WTC11 (cell line): ENCODE measurements at regions of chr11 and their contacts with region 1.

Region 1: DNA sequence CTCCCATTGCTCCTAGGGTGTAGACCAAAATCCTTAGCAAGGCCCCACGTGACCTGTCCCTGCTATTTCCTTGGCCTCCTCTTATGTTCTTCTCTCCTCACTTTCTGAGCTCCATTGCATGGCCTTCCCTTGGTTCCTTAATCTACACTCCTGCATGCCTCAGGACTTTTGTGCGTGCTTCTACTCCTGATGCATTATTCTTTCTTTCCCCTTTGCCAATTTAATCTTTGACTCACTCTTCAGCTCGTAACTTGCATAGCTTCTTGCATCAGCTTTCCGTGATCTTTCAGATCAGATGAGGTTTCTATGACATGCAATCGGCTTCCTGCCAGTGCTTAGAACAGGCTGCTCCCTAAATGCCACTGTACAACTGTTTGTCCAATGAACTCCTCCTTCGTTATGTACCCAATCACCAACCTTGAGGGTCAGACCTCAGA is 261.6 kb upstream of the CADM1 start:
- DNase-seq: no peak
- ATAC-seq: no peak
- H3K4me3 Mint-ChIP-seq: no peak overlapping the region
- H3K27ac Mint-ChIP-seq: no peak overlapping the region
- H3K4me1 Mint-ChIP-seq: peaks cover under 1% of the 10 kb centered on the region
- H3K27me3 Mint-ChIP-seq: peaks cover 19% of the 10 kb centered on the region
- CTCF ChIP-seq: no peak

Region 2: DNA sequence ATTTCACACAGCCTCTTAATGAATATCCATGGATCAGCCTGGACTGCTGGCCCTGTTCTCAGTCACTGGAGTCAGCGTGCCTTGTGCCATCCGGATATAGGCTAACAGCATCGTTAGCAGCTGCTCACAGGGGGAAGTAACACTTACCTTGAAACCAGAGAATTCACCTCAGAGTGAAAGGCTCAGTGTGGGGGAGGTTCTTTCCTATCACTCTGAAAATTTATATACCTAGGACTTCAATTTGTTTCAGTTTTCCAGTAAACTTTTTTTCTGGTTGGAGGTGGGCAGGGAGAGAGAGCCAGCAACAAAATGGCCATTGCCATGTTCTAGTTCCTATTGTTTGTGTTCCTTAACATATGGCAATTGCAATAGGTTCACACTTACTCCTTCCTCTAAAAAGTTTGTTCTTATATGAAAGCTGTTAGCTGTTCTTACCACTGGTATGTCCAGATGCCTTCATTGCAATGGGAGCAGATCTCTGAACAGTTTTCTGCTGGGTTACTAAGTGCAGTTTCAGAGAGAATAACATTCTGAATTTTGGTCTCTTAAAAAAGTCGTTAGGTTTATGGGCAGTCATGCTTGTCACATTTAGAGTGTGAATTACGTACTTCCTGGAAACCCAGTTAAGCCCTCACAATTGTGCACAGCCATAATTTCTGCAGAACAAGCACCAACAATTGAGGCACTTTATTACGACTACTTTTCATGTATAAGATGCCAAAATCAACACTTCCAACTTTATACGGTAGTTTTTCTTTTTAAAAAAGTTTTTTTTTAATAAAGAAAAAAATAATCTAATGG is 509.2 kb before region 1 on chr11:
- CTCF ChIA-PET with region 1: no interaction called
- POLR2A ChIA-PET with region 1: interaction called, 11 read pairs
- DNase-seq: peak; percentile 22
- ATAC-seq: peak; percentile 89
- H3K4me3 Mint-ChIP-seq: no peak overlapping the region
- H3K27ac Mint-ChIP-seq: peak overlapping the region; percentile 72
- H3K4me1 Mint-ChIP-seq: peaks cover 54% of the 10 kb centered on the region
- H3K27me3 Mint-ChIP-seq: peaks cover 3% of the 10 kb centered on the region; the same call in 1 of the 2 replicates
- CTCF ChIP-seq: no peak

Region 3: GRCh38 chr11:115716601-115717529 is 49.0 kb before region 1 on chr11:
- CTCF ChIA-PET with region 1: no interaction called
- POLR2A ChIA-PET with region 1: no interaction called
- DNase-seq: no peak
- ATAC-seq: no peak
- H3K4me3 Mint-ChIP-seq: no peak overlapping the region
- H3K27ac Mint-ChIP-seq: no peak overlapping the region
- H3K4me1 Mint-ChIP-seq: peaks cover 7% of the 10 kb centered on the region
- H3K27me3 Mint-ChIP-seq: peaks cover 4% of the 10 kb centered on the region
- CTCF ChIP-seq: no peak

Region 4: DNA sequence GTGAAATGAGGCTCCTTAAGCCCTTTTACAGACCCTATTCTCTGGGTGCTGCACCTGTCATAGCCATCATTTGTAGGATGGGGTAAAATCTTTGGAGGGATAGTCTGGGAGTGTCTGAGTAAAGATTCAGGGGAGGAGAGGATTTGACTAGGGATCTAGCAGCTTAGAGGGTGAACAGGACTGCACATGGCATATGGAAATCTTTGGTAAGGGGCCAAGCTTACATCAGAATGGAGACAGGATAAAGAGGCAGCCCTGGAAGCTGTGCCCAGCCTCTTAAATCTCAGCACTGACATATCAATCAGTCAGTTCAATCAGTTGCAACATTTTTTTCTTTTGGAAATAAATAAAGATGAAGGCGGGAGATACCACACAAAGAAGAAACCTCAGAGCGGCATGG is 40.2 kb after region 1 on chr11:
- CTCF ChIA-PET with region 1: no interaction called
- POLR2A ChIA-PET with region 1: no interaction called
- DNase-seq: no peak
- ATAC-seq: no peak
- H3K4me3 Mint-ChIP-seq: no peak overlapping the region
- H3K27ac Mint-ChIP-seq: no peak overlapping the region
- H3K4me1 Mint-ChIP-seq: no peaks in the 10 kb centered on the region
- H3K27me3 Mint-ChIP-seq: peaks cover 14% of the 10 kb centered on the region
- CTCF ChIP-seq: no peak

Region 5: DNA sequence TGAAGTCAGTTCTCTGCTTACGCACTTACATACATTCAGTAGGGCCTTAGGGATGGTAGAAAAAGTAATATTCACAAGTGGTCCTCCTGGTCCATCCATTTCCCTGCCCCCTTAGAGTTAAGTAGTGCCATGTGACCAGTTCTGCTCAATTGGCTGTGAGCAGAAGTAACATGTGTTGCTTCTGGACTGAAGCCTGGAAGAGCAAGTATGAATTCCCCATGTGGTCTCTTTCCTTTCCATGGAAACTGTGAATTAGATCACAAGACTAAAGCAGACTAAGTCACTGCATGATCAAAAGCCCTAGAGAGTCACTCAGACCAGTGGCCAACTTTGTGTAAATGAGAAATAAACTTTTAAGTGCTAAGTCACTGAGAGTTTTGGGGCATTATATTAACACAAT is 80.1 kb after region 1 on chr11:
- CTCF ChIA-PET with region 1: no interaction called
- POLR2A ChIA-PET with region 1: no interaction called
- DNase-seq: no peak
- ATAC-seq: no peak
- H3K4me3 Mint-ChIP-seq: no peak overlapping the region
- H3K27ac Mint-ChIP-seq: no peak overlapping the region
- H3K4me1 Mint-ChIP-seq: no peaks in the 10 kb centered on the region
- H3K27me3 Mint-ChIP-seq: peaks cover 9% of the 10 kb centered on the region
- CTCF ChIP-seq: no peak